ENCODE measurements at regions of chr21 and their contacts with region 1.

Region 1: GRCh38 chr21:39217356-39218081 is 34.3 kb upstream of the PSMG1 start:
- DNase-seq: no peak
- ATAC-seq: no peak
- H3K4me3 ChIP-seq: no peak overlapping the region
- H3K4me3 Mint-ChIP-seq: no peak overlapping the region
- H3K27ac ChIP-seq: no peak overlapping the region
- H3K27ac Mint-ChIP-seq: peak overlapping the region in 2 of 9 donors; percentile 45 to 59
- H3K4me1 ChIP-seq: no peaks in the 10 kb centered on the region
- H3K4me1 Mint-ChIP-seq: peaks cover 0 to 36% (median 19%) of the 10 kb centered on the region in 7 donors
- H3K27me3 ChIP-seq: no peaks in the 10 kb centered on the region
- H3K27me3 Mint-ChIP-seq: no peaks in the 10 kb centered on the region

Region 2: GRCh38 chr21:39251326-39251725 is 33.8 kb after region 1 on chr21:
- CTCF ChIA-PET with region 1: no interaction called
- POLR2A ChIA-PET with region 1: no interaction called
- intact Hi-C with region 1: no loop called
- DNase-seq: no peak
- ATAC-seq: no peak
- H3K4me3 ChIP-seq: no peak overlapping the region
- H3K4me3 Mint-ChIP-seq: no peak overlapping the region
- H3K27ac ChIP-seq: no peak overlapping the region
- H3K27ac Mint-ChIP-seq: no peak overlapping the region
- H3K4me1 ChIP-seq: no peaks in the 10 kb centered on the region
- H3K4me1 Mint-ChIP-seq: peaks cover 0 to 16% (median 5%) of the 10 kb centered on the region in 7 donors
- H3K27me3 ChIP-seq: no peaks in the 10 kb centered on the region
- H3K27me3 Mint-ChIP-seq: no peaks in the 10 kb centered on the region

Region 3: GRCh38 chr21:39288987-39289386 is 71.5 kb after region 1 on chr21:
- CTCF ChIA-PET with region 1: no interaction called
- POLR2A ChIA-PET with region 1: no interaction called
- intact Hi-C with region 1: loop called in 1 of 2 experiments (anchors 5 kb)
- DNase-seq: no peak
- ATAC-seq: no peak
- H3K4me3 ChIP-seq: no peak overlapping the region
- H3K4me3 Mint-ChIP-seq: no peak overlapping the region
- H3K27ac ChIP-seq: no peak overlapping the region
- H3K27ac Mint-ChIP-seq: no peak overlapping the region
- H3K4me1 ChIP-seq: no peaks in the 10 kb centered on the region
- H3K4me1 Mint-ChIP-seq: peaks cover 4 to 23% (median 17%) of the 10 kb centered on the region in 7 donors
- H3K27me3 ChIP-seq: no peaks in the 10 kb centered on the region
- H3K27me3 Mint-ChIP-seq: no peaks in the 10 kb centered on the region